B cell (primary cell): ENCODE measurements at regions of chr11 and their contacts with region 1.

Region 1: DNA sequence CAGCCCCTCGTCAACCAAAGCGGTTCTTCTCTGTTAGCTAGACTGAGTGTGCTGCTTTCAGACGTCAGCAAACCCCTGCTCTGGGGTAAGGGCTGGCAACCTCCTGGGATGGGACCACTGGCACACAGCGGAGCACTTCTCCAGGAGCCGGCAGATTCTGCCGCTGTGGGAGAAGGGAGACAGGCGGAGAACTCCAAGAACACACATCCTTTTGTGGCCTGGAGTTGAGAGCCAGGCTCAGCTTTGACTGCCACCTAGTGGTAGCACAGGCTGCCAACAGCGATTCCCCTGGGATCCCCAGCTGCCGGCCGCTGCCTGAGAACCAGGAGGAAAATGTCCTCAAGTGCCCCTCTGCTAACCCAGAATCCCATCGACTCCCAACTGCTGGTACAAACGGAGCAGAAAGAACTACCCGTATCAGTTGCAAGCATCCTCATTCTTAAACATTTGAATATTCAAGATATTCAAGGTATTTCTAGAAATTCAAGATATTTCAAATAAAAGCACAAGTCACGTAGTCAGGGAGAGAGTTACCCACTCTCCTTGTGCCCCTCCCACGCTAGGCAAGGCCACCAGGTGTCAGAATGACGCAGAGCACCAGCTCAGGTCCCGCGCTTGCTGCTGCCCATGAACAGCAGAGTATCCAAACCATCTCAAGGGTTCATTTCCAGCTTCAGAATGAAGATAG is 4.9 kb downstream of the LTO1 start:
- DNase-seq: peak; percentile 81
- ATAC-seq: peak; percentile 35
- H3K4me3 ChIP-seq: no peak overlapping the region
- H3K4me3 Mint-ChIP-seq: no peak overlapping the region
- H3K27ac ChIP-seq: no peak overlapping the region
- H3K27ac Mint-ChIP-seq: peak overlapping the region; percentile 70
- H3K4me1 ChIP-seq: peaks cover 16 to 21% of the 10 kb centered on the region in 2 donors
- H3K4me1 Mint-ChIP-seq: peaks cover 33% of the 10 kb centered on the region
- H3K27me3 ChIP-seq: no peaks in the 10 kb centered on the region
- H3K27me3 Mint-ChIP-seq: no peaks in the 10 kb centered on the region
- CTCF ChIP-seq: peak; percentile 94

Region 2: GRCh38 chr11:68903288-68904247 is 766.7 kb before region 1 on chr11 and contains the starts of genes IGHMBP2 and MRPL21:
- CTCF ChIA-PET with region 1: no interaction called
- POLR2A ChIA-PET with region 1: no interaction called
- intact Hi-C with region 1: loop called (anchors 10 kb)
- DNase-seq: peak; percentile 90
- ATAC-seq: peak; percentile 95
- H3K4me3 ChIP-seq: peak within 1 kb of the TSS; percentile 79 to 99 (median 93)
- H3K4me3 Mint-ChIP-seq: peak within 1 kb of the TSS; percentile 97
- H3K27ac ChIP-seq: peak within 1 kb of the TSS; percentile 75 to 91
- H3K27ac Mint-ChIP-seq: peak within 1 kb of the TSS; percentile 88
- H3K4me1 ChIP-seq: peaks cover 14 to 21% of the 10 kb centered on the region in 2 donors
- H3K4me1 Mint-ChIP-seq: peaks cover 41% of the 10 kb centered on the region
- H3K27me3 ChIP-seq: no peaks in the 10 kb centered on the region
- H3K27me3 Mint-ChIP-seq: no peaks in the 10 kb centered on the region
- CTCF ChIP-seq: no peak
- total RNA-seq, gene IGHMBP2: 37.0 and 41.4 TPM in 2 replicates
- total RNA-seq, gene MRPL21: 34.4 and 35.8 TPM in 2 replicates

Region 3: DNA sequence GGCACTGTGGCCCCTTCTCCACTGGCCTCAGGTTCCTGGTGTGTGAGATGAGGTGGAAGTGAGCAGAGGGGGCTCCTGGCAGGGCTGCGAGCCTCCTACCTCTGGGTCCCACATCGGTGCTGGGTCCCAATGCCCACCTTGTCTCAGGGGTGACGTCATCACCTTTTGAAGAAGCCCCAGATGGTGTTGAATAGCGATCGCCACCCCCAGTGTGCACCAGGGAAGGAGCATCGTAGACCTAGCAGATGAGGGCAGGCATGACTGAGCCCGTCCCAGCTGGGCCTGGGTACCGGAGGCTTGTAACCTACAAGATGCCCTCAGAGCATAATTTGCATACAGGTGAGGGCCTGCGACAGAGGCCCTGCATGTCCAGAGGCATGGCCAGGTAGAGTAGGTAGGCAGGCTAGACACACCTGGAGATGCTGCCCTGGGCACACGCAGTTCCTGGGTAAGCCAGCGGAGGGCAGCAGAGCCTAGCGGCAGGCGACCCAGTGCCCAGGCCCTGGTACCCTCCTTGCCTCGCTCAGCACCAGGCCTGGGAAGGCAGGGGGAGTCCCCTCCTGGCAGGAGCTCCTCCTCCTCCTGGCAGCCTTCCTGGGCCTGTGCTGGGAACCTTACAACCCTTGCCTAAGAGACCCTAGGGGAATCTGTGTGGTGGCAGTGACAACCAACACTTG is 569.0 kb before region 1 on chr11:
- CTCF ChIA-PET with region 1: interaction called, 21 read pairs
- POLR2A ChIA-PET with region 1: no interaction called
- intact Hi-C with region 1: loop called (anchors 1 kb)
- DNase-seq: peak; percentile 83
- ATAC-seq: peak; percentile 98
- H3K4me3 ChIP-seq: no peak overlapping the region
- H3K4me3 Mint-ChIP-seq: no peak overlapping the region
- H3K27ac ChIP-seq: no peak overlapping the region
- H3K27ac Mint-ChIP-seq: no peak overlapping the region
- H3K4me1 ChIP-seq: peaks cover 0 to 3% of the 10 kb centered on the region in 2 donors
- H3K4me1 Mint-ChIP-seq: peaks cover 2% of the 10 kb centered on the region
- H3K27me3 ChIP-seq: peaks cover 0 to 8% (median 2%) of the 10 kb centered on the region in 4 experiments
- H3K27me3 Mint-ChIP-seq: peaks cover 2% of the 10 kb centered on the region
- CTCF ChIP-seq: peak; percentile 99

Region 4: GRCh38 chr11:69657911-69658625 is 12.2 kb before region 1 on chr11:
- CTCF ChIA-PET with region 1: interaction called, 13 read pairs
- POLR2A ChIA-PET with region 1: no interaction called
- intact Hi-C with region 1: no loop called
- DNase-seq: no peak
- ATAC-seq: no peak
- H3K4me3 ChIP-seq: no peak overlapping the region
- H3K4me3 Mint-ChIP-seq: no peak overlapping the region
- H3K27ac ChIP-seq: no peak overlapping the region
- H3K27ac Mint-ChIP-seq: no peak overlapping the region
- H3K4me1 ChIP-seq: no peaks in the 10 kb centered on the region
- H3K4me1 Mint-ChIP-seq: no peaks in the 10 kb centered on the region
- H3K27me3 ChIP-seq: no peaks in the 10 kb centered on the region
- H3K27me3 Mint-ChIP-seq: no peaks in the 10 kb centered on the region
- CTCF ChIP-seq: no peak

Region 5: GRCh38 chr11:69683764-69684333 is 13.5 kb after region 1 on chr11:
- CTCF ChIA-PET with region 1: interaction called, 16 read pairs
- POLR2A ChIA-PET with region 1: no interaction called
- intact Hi-C with region 1: no loop called
- DNase-seq: no peak
- ATAC-seq: no peak
- H3K4me3 ChIP-seq: no peak overlapping the region
- H3K4me3 Mint-ChIP-seq: no peak overlapping the region
- H3K27ac ChIP-seq: no peak overlapping the region
- H3K27ac Mint-ChIP-seq: no peak overlapping the region
- H3K4me1 ChIP-seq: peaks cover 7 to 9% of the 10 kb centered on the region in 2 donors
- H3K4me1 Mint-ChIP-seq: peaks cover 7% of the 10 kb centered on the region
- H3K27me3 ChIP-seq: peaks cover 0 to 19% (median 6%) of the 10 kb centered on the region in 4 experiments
- H3K27me3 Mint-ChIP-seq: peaks cover 23% of the 10 kb centered on the region
- CTCF ChIP-seq: no peak